Activated naive CD4-positive, alpha-beta T cell treated with anti-CD3 and anti-CD28 coated beads for 36 hours (primary cell): ENCODE measurements at regions of chr5 and their contacts with region 1.

Region 1: DNA sequence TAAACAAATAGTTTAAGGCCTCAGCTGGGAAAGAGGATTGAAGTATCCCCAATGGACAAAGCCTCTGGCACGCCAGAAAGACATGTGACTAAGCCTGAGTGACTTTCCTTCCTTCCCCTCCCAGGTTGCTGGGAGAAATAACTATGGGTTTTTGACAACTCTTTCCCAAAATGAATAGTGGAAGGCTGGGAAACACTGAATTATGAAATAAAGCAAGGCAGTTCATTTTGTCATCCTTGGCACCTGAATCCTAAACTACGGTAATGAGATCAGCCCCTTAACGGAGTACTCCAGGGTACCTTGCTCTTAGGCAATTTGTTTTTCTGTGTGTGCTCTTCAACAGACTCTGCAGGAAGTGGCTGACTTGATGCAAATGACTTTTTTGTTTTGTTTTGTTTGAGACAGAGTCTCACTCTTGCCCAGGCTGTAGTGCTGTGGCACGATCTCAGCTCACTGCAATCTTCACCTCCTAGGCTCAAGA is 75.2 kb downstream of the LMNB1 start:
- DNase-seq: peak; percentile 24
- H3K4me3 Mint-ChIP-seq: no peak overlapping the region
- H3K27ac Mint-ChIP-seq: peak overlapping the region; percentile 81
- H3K4me1 Mint-ChIP-seq: peaks cover 50% of the 10 kb centered on the region
- H3K27me3 Mint-ChIP-seq: no peaks in the 10 kb centered on the region

Region 2: GRCh38 chr5:126869005-126869451 is 16.9 kb after region 1 on chr5:
- CTCF ChIA-PET with region 1: no interaction called
- intact Hi-C with region 1: no loop called
- DNase-seq: peak; percentile 51
- H3K4me3 Mint-ChIP-seq: peak overlapping the region; percentile 36
- H3K27ac Mint-ChIP-seq: no peak overlapping the region
- H3K4me1 Mint-ChIP-seq: peaks cover 10% of the 10 kb centered on the region
- H3K27me3 Mint-ChIP-seq: no peaks in the 10 kb centered on the region

Region 3: DNA sequence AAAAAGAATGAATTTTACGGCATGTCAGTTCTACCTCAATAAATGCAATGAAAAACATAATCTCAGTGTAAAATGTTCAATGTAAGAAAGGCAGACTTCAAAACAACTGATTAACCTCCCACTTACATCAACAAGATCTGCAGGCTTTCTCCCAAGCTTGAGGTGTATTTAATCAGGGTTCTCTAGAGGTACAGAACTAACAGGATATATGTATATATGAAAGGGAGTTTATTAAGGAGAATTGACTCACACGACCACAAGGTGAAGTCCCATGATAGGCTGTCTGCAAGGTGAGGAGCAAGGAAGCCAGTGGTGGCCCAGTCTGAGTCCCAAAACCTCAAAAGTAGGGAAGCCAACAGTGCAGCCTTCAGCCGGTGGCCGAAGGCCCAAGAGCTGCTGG is 142.4 kb after region 1 on chr5:
- CTCF ChIA-PET with region 1: no interaction called
- intact Hi-C with region 1: no loop called
- DNase-seq: peak; percentile 50
- H3K4me3 Mint-ChIP-seq: no peak overlapping the region
- H3K27ac Mint-ChIP-seq: no peak overlapping the region
- H3K4me1 Mint-ChIP-seq: peaks cover 44% of the 10 kb centered on the region
- H3K27me3 Mint-ChIP-seq: no peaks in the 10 kb centered on the region

Region 4: DNA sequence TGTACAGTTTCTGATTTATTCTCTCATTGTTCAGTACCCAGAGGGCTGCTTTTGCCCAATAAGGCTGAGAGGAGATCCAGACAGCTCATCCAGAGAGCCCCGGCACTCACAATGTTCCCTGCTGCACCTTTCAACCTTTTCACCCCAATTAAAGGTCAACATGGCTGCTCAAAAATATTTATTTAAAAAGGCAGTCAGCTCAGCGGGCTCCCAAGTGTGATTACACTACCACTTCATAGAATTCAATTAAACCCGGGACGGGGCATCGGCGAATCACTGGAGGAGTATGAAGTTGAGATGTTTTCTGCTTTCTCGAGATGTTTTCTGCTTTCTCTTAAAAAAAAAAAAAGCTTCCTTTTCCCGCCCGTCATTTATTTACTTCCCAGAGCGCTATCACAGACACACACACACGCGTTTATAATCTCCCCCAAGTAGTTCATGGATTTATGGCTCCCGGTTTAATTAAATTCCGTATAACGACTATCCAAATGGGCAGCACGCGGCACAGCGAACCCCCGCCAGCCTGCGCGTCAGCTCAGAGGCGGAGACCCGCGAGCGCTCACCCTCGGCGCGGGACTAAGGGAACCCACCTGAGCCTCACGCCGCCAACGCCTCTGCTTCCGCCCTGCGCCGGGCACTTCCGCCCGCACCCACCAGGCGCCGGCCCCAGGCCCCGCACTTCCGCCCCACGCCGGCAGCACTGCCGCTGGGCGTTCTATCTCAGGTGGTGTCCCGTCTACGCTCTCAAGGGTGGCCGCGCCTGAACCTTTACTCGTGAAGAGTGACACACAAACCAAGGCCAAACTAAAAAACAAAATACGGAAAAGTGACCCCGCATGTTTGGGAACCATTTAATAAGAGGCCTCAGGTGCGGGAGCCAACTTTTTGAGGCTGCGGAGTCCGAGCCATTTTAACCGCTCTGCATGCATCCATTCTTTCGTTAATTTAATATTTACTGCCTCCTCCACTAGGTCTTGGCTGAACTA is 221.0 kb after region 1 on chr5 and contains the start of gene C5orf63:
- CTCF ChIA-PET with region 1: no interaction called
- intact Hi-C with region 1: loop called (anchors 1 kb)
- DNase-seq: peak; percentile 82
- H3K4me3 Mint-ChIP-seq: peak within 1 kb of the TSS; percentile 92
- H3K27ac Mint-ChIP-seq: peak within 1 kb of the TSS; percentile 90
- H3K4me1 Mint-ChIP-seq: peaks cover 21% of the 10 kb centered on the region
- H3K27me3 Mint-ChIP-seq: no peaks in the 10 kb centered on the region
- total RNA-seq, gene C5orf63: 9.4 to 11.6 TPM